HEK293 (cell line): ENCODE measurements at regions of chr5 and their contacts with region 1.

Region 1: GRCh38 chr5:132386644-132387286 is 17.3 kb downstream of the SLC22A5 start:
- H3K4me3 ChIP-seq: no peak overlapping the region
- H3K27ac ChIP-seq: no peak overlapping the region
- H3K4me1 ChIP-seq: no peaks in the 10 kb centered on the region
- CTCF ChIP-seq: peak; percentile 67; the same call in 1 of the 2 replicates

Region 2: DNA sequence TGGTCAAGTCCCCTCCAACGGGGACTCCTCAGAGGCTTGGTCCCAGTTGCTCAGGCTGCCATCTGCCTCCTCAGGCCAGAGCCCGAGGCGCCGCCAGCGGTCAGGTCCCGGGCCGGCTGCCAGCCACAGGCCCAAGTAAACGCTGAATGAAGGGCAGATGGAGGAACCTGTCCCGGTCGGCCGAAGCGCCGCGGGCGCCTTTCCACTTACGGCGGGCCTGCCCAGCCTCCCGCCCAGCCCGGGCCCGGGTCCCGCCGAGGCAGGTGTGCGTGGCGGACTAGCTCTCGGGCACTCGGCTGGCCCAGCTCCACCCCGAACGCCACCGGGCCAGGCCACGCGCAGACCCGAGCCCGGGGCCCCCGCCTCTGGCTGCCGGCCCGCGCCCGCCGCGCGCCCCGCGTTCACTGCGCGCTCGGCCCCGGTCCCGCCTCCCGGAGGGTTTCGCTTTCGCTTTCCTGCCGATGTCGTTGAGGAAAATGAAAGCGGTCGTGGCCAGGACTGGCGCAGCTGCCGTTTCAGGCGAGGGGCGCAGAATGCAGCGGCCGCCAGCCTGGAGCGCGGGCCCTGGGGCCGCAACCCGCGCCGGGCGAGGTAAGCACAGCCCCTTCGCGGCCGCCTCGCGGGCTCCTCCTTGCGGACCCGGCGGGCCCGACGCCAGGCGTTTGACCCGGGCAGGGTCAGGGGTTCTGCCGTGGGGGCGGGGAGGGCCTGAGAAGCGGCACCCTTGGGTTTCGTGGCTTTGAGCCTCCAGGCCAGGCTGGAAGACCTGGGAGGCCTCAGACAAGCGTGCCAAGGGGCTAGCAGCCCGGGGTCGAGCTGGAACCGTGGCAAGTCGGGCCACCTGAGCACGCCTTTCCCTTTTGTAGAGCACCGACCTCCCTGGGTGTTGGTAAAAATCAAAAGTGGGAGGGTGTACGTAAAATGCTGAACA is 24.0 kb after region 1 on chr5:
- CTCF ChIA-PET with region 1: interaction called, 28 read pairs
- POLR2A ChIA-PET with region 1: no interaction called
- H3K4me3 ChIP-seq: peak overlapping the region; percentile 54
- H3K27ac ChIP-seq: peak overlapping the region; percentile 93
- H3K4me1 ChIP-seq: peaks cover 4% of the 10 kb centered on the region; the same call in 1 of the 2 replicates
- CTCF ChIP-seq: peak; percentile 55; the same call in 1 of the 2 replicates

Region 3: DNA sequence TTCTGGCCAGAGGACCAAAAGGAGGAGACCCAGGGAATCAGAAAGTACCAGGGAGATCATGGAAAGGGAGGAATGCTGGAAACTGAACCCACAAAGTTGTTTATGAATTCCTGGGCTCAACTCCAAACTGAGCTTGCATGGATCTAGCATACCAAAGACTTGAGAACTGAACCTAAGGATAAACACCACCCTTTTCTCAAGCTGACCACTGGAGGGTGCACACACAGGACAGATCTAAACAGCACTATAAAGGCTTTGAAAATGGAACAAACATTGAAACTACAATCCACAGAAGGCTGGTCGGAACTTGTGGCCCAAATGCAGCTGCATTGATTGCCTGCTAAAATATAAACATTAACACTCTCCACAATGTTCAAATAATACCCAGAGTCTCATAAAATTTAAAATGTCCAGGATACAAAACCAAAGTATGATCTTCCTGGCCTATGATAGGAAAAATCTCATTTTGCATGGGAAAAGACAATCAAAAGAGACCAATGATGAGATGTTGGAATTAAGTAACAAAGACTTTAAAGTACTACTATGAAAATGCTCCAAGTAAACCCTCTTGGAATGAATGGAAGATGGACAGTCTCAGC is 119.4 kb after region 1 on chr5:
- CTCF ChIA-PET with region 1: interaction called, 140 read pairs
- POLR2A ChIA-PET with region 1: interaction called, 3 read pairs
- H3K4me3 ChIP-seq: no peak overlapping the region
- H3K27ac ChIP-seq: no peak overlapping the region
- H3K4me1 ChIP-seq: no peaks in the 10 kb centered on the region
- CTCF ChIP-seq: peak; percentile 46; the same call in 1 of the 2 replicates